Caco-2 (cell line): ENCODE measurements at regions of chr22 and their contacts with region 1.

Region 1: DNA sequence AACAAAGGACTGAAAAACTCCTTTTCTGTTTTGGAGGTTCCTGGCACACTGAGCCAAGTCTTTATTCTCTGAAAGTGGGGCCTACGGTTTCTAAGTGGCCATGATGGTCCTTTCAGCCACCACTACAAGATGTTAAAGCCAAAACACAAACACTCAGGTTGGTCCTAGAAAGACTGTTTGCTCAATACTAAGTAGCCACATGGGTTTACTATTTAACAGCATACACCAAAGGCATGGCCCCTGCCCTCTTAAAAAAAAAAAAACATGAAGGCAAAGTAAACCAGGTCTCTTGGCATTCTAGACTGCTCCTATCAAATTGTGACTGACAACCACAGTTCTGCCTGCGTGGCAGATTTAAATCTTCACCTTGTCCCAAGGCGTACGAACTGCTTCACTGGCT is 123.6 kb upstream of the BID start:
- DNase-seq: peak in 1 of 2 experiments; percentile 19
- H3K4me3 ChIP-seq: no peak overlapping the region
- H3K4me3 Mint-ChIP-seq: no peak overlapping the region
- H3K27ac Mint-ChIP-seq: peak overlapping the region; percentile 73
- H3K4me1 ChIP-seq: peaks cover 36% of the 10 kb centered on the region
- H3K4me1 Mint-ChIP-seq: peaks cover 28% of the 10 kb centered on the region
- H3K27me3 ChIP-seq: no peaks in the 10 kb centered on the region
- H3K27me3 Mint-ChIP-seq: no peaks in the 10 kb centered on the region
- CTCF ChIP-seq: no peak

Region 2: DNA sequence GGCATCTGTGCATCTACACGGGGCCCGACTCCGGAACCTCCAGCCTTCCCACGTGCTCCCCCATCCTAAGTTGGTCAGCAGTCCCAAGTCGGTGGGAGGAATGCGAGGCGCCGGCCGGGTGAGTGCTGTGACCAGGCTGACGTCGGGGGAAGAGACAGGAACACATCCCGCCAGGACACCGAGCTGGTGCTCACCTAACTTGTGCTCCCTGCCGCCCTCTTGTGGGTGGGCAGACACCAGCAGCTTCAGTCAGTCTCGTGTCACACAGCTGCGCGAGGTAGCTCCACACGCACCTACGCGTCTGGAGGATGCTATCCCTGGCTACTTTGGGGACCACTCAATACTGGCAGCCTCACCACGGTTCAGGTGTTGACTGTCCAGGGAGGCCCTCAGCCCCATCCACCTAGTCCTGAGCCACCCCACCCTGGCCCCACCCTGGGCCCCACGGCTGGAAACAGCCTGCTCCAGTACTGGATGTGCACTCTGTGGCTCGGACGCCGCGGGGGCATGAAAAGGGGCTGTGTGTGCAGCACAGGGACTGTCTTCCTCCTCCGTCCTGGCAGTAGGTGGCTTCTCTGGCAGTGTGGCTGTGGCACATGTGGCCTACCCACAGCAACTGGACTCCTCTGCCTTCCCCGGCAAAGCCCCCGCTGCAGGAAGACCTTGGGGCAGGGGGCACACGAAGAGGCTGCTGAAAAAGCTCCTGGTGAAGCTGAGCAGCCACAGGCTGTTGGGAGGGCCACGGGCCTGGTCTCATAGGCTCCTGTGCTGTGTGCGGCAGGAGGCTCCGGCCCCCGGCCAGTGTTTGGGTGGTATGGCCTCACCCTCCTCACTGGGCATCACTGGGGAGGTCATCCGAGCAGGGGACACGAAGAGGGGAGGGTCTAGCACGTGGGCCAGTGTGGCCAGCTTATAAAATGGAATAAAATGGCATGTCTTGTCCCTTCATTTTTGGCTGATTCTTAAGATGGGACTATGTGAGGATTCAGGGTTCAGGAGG is 112.4 kb before region 1 on chr22:
- CTCF ChIA-PET with region 1: no interaction called
- POLR2A ChIA-PET with region 1: no interaction called
- intact Hi-C with region 1: no loop called
- DNase-seq: peak; percentile 70 to 78
- H3K4me3 ChIP-seq: no peak overlapping the region
- H3K4me3 Mint-ChIP-seq: no peak overlapping the region
- H3K27ac Mint-ChIP-seq: no peak overlapping the region
- H3K4me1 ChIP-seq: peaks cover 10% of the 10 kb centered on the region
- H3K4me1 Mint-ChIP-seq: no peaks in the 10 kb centered on the region
- H3K27me3 ChIP-seq: no peaks in the 10 kb centered on the region
- H3K27me3 Mint-ChIP-seq: no peaks in the 10 kb centered on the region
- CTCF ChIP-seq: peak; percentile 60

Region 3: DNA sequence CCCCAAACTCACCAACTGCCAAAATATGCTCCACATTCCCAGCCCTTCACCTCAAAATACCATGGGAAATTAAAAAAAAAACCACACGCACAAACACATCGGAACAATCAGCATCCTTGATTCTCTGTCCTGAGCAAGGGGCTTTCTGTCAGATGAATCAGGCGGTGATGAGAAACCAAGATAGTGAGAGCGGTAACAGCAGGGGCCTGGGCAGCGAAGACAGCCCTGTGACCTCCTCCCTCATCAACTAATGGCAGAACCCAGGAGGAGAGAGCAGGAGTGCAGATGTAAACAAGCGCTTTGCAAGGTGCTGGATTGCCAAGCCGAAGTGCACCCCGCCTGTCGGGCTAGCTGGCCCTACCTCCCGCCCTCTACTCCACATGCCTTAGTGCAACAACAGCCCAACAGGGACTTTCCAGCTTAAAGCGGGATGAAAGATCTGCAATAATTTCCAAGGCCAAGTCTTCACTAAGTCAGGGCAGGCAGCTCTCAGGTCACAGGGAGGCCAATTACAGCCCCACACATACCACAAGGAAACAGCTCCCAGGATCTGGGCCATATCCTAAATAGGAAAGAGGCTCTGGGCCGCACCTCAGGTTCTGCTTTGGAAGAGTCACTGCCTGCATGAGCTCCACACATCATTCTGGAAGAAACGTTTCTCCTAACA is 51.4 kb before region 1 on chr22:
- CTCF ChIA-PET with region 1: no interaction called
- POLR2A ChIA-PET with region 1: no interaction called
- intact Hi-C with region 1: loop called (anchors 5 kb)
- DNase-seq: no peak
- H3K4me3 ChIP-seq: no peak overlapping the region
- H3K4me3 Mint-ChIP-seq: no peak overlapping the region
- H3K27ac Mint-ChIP-seq: no peak overlapping the region
- H3K4me1 ChIP-seq: peaks cover 12% of the 10 kb centered on the region
- H3K4me1 Mint-ChIP-seq: no peaks in the 10 kb centered on the region
- H3K27me3 ChIP-seq: no peaks in the 10 kb centered on the region
- H3K27me3 Mint-ChIP-seq: no peaks in the 10 kb centered on the region
- CTCF ChIP-seq: no peak

Region 4: DNA sequence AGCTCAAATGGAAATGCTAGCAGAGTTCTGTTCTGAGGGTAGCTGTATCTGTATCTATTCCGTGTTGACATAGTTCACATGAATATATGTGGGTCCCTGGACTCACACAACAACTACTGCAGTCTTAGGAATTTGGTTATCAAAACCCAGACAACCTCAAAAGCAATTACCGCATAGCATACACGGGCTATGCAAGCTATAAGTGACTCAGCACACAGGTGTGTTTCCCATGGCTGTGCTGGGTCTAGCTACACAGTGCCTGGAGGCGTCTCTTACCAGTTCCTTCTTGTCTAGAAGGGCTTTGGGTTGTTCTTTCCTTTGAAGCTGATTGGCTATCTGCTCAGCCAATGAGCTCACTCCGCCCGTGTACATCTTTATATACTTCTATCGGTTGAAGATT is 25.4 kb before region 1 on chr22:
- CTCF ChIA-PET with region 1: no interaction called
- POLR2A ChIA-PET with region 1: no interaction called
- intact Hi-C with region 1: loop called (anchors 2 kb)
- DNase-seq: peak; percentile 43 to 59
- H3K4me3 ChIP-seq: no peak overlapping the region
- H3K4me3 Mint-ChIP-seq: no peak overlapping the region
- H3K27ac Mint-ChIP-seq: no peak overlapping the region
- H3K4me1 ChIP-seq: no peaks in the 10 kb centered on the region
- H3K4me1 Mint-ChIP-seq: peaks cover 11% of the 10 kb centered on the region
- H3K27me3 ChIP-seq: no peaks in the 10 kb centered on the region
- H3K27me3 Mint-ChIP-seq: no peaks in the 10 kb centered on the region
- CTCF ChIP-seq: no peak

Region 5: DNA sequence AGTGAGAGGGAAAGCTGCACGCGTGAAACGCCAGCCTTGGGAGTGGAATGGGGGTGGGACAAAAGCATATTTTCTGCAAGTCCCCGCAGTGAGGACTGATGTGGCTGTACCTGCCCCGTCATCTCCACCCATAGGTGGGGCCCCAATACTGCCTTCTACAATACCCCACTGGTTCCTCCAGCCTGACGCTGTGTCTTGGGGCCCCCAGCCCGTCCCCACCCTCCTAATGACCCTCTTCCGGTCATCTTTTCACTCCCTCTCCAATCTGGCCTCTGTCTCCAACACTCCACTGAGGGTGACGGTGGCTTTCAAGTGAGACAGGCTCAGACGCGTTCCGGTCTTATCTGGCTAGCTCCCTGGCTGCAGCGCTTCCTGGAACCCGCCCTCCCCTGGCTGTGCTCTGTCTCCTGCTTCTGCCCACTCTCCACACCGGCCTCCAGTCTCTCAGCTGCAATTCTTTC is 22.3 kb after region 1 on chr22:
- CTCF ChIA-PET with region 1: no interaction called
- POLR2A ChIA-PET with region 1: interaction called, 7 read pairs
- intact Hi-C with region 1: loop called (anchors 2 kb)
- DNase-seq: peak; percentile 77 to 89
- H3K4me3 ChIP-seq: peak overlapping the region; percentile 19
- H3K4me3 Mint-ChIP-seq: peak overlapping the region; percentile 65
- H3K27ac Mint-ChIP-seq: peak overlapping the region; percentile 74
- H3K4me1 ChIP-seq: peaks cover 49% of the 10 kb centered on the region
- H3K4me1 Mint-ChIP-seq: peaks cover 30% of the 10 kb centered on the region
- H3K27me3 ChIP-seq: no peaks in the 10 kb centered on the region
- H3K27me3 Mint-ChIP-seq: no peaks in the 10 kb centered on the region
- CTCF ChIP-seq: peak in 1 of 2 experiments; percentile 32